ENCODE measurements at regions of chr6 and their contacts with region 1.

Region 1: GRCh38 chr6:81614292-81614691 is 138.2 kb downstream of the TENT5A start:
- DNase-seq: peak; percentile 77
- H3K4me3 ChIP-seq: peak overlapping the region in 1 of 3 experiments; percentile 8
- H3K27ac ChIP-seq: peak overlapping the region; percentile 76
- H3K4me1 ChIP-seq: peaks cover 22% of the 10 kb centered on the region
- H3K27me3 ChIP-seq: no peaks in the 10 kb centered on the region
- CTCF ChIP-seq: no peak
- POLR2A ChIP-seq: no peak

Region 2: GRCh38 chr6:81682235-81682795 is 68.0 kb after region 1 on chr6:
- CTCF ChIA-PET with region 1: no interaction called
- POLR2A ChIA-PET with region 1: no interaction called
- dilution Hi-C with region 1: no loop called
- intact Hi-C with region 1: no loop called
- DNase-seq: no peak
- H3K4me3 ChIP-seq: no peak overlapping the region
- H3K27ac ChIP-seq: no peak overlapping the region
- H3K4me1 ChIP-seq: no peaks in the 10 kb centered on the region
- H3K27me3 ChIP-seq: no peaks in the 10 kb centered on the region
- CTCF ChIP-seq: no peak
- POLR2A ChIP-seq: no peak

Region 3: DNA sequence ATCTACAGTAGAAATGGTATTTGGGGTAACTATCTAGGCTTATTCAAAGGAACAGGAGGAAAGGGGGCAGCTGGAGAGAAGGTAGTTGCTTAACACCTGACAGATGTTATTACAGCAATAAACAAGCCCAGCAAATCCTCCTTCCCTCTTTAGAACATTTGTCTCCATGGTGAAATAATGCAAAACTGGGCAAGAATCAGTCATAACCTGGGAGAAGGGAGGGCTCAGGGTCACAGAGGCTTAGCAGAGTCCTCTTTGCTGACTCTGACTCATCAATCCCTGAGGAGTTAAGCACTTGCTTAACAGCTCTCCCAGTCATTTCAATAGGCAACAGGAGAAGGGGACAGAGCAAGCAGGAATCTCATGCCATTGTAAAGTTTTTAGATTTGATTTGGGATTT is 403.0 kb after region 1 on chr6:
- CTCF ChIA-PET with region 1: no interaction called
- POLR2A ChIA-PET with region 1: no interaction called
- dilution Hi-C with region 1: no loop called
- intact Hi-C with region 1: loop called (anchors 10 kb)
- DNase-seq: peak; percentile 36
- H3K4me3 ChIP-seq: no peak overlapping the region
- H3K27ac ChIP-seq: peak overlapping the region; percentile 6
- H3K4me1 ChIP-seq: peaks cover 52% of the 10 kb centered on the region
- H3K27me3 ChIP-seq: no peaks in the 10 kb centered on the region
- CTCF ChIP-seq: no peak
- POLR2A ChIP-seq: no peak

Region 4: GRCh38 chr6:83047065-83047754 is 1432.9 kb after region 1 on chr6:
- CTCF ChIA-PET with region 1: no interaction called
- POLR2A ChIA-PET with region 1: no interaction called
- dilution Hi-C with region 1: no loop called
- intact Hi-C with region 1: loop called (anchors 5 kb)
- DNase-seq: no peak
- H3K4me3 ChIP-seq: no peak overlapping the region
- H3K27ac ChIP-seq: no peak overlapping the region
- H3K4me1 ChIP-seq: no peaks in the 10 kb centered on the region
- H3K27me3 ChIP-seq: no peaks in the 10 kb centered on the region
- CTCF ChIP-seq: no peak
- POLR2A ChIP-seq: no peak

Measured in endothelial cell of umbilical vein (primary cell).